Activated B cell treated with CpG ODN at 0.5 μM for 24 hours (primary cell): ENCODE measurements at regions of chr11 and their contacts with region 1.

Region 1: GRCh38 chr11:662689-663274 is 25.7 kb downstream of the DRD4 start:
- DNase-seq: peak; percentile 51
- ATAC-seq: peak; percentile 85
- H3K4me3 Mint-ChIP-seq: no peak overlapping the region
- H3K27ac Mint-ChIP-seq: no peak overlapping the region
- H3K4me1 Mint-ChIP-seq: peaks cover 4% of the 10 kb centered on the region
- H3K27me3 Mint-ChIP-seq: no peaks in the 10 kb centered on the region
- CTCF ChIP-seq: no peak

Region 2: GRCh38 chr11:554824-555472 is 107.8 kb before region 1 on chr11:
- CTCF ChIA-PET with region 1: interaction called, 5 read pairs
- POLR2A ChIA-PET with region 1: no interaction called
- intact Hi-C with region 1: loop called (anchors 1 kb)
- DNase-seq: peak; percentile 70
- ATAC-seq: peak; percentile 93
- H3K4me3 Mint-ChIP-seq: peak overlapping the region; percentile 24
- H3K27ac Mint-ChIP-seq: no peak overlapping the region
- H3K4me1 Mint-ChIP-seq: peaks cover 6% of the 10 kb centered on the region
- H3K27me3 Mint-ChIP-seq: no peaks in the 10 kb centered on the region
- CTCF ChIP-seq: no peak

Region 3: DNA sequence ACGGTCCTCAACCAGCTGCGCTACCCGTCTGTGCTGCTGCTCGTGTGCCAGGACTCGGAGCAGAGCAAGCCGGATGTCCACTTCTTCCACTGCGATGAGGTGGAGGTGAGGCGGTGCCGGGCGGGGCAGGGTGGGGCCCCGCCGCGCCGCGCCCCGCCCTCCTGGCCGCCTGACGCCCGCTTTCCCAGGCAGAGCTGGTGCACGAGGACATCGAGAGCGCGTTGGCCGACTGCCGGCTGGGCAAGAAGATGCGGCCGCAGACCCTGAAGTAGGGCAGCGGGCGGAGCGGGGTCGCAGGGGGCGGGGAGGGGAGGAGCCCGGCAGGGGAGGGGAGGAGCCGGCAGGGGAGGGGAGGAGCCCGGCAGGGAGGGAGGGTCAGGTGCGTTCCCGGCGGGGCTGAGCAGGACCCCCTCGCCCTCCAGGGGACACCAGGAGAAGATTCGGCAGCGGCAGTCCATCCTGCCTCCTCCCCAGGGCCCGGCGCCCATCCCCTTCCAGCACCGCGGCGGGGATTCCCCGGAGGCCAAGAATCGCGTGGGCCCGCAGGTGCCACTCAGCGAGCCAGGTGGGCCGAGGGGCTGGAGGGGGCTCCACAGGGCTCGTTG is 58.0 kb after region 1 on chr11:
- CTCF ChIA-PET with region 1: interaction called, 34 read pairs
- POLR2A ChIA-PET with region 1: no interaction called
- intact Hi-C with region 1: loop called (anchors 1 kb)
- DNase-seq: no peak
- ATAC-seq: peak; percentile 25
- H3K4me3 Mint-ChIP-seq: peak overlapping the region; percentile 35
- H3K27ac Mint-ChIP-seq: no peak overlapping the region
- H3K4me1 Mint-ChIP-seq: peaks cover 21% of the 10 kb centered on the region
- H3K27me3 Mint-ChIP-seq: peaks cover 6% of the 10 kb centered on the region
- CTCF ChIP-seq: no peak

Region 4: DNA sequence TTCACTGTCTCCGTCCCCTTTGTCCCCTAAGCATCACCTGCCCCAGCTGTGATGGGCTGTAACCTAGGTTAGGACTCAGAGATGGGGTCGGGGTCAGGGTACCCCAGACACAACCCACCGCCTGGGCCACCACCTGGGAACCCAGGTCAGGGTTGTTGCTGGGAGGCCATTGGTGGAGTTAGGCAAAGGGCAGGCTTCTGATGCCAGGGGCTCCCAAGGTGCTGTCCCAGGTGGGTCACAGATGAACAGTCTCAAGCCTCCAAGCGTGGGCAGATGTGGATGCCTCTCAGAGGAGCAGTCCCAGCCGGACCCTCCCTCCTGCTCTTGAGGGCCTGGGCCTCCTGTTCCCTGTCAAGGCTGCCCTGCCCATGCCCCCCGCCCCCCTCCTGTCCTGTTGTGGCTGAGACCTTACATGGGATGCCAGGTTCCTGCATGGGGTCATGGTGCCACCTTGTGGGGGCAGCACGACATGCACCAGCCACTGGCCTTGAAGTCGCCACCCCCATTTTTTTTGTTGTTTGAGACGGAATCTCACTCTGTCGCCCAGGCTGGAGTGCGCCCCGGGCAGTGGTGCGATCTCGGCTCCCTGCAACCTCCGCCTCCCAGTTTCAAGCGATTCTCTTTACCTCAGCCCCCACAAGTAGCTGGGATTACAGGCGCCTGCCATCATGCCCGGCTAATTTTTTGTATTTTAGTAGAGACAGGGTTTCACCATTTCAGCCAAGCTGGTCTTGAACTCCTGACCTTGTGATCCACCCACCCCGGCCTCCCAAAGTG is 102.4 kb after region 1 on chr11:
- CTCF ChIA-PET with region 1: interaction called, 3 read pairs
- POLR2A ChIA-PET with region 1: no interaction called
- intact Hi-C with region 1: loop called (anchors 1 kb)
- DNase-seq: peak; percentile 55
- ATAC-seq: peak; percentile 91
- H3K4me3 Mint-ChIP-seq: no peak overlapping the region
- H3K27ac Mint-ChIP-seq: no peak overlapping the region
- H3K4me1 Mint-ChIP-seq: peaks cover 3% of the 10 kb centered on the region
- H3K27me3 Mint-ChIP-seq: no peaks in the 10 kb centered on the region
- CTCF ChIP-seq: no peak